Endothelial cell of umbilical vein (primary cell): ENCODE measurements at regions of chr18 and their contacts with region 1.

Region 1: DNA sequence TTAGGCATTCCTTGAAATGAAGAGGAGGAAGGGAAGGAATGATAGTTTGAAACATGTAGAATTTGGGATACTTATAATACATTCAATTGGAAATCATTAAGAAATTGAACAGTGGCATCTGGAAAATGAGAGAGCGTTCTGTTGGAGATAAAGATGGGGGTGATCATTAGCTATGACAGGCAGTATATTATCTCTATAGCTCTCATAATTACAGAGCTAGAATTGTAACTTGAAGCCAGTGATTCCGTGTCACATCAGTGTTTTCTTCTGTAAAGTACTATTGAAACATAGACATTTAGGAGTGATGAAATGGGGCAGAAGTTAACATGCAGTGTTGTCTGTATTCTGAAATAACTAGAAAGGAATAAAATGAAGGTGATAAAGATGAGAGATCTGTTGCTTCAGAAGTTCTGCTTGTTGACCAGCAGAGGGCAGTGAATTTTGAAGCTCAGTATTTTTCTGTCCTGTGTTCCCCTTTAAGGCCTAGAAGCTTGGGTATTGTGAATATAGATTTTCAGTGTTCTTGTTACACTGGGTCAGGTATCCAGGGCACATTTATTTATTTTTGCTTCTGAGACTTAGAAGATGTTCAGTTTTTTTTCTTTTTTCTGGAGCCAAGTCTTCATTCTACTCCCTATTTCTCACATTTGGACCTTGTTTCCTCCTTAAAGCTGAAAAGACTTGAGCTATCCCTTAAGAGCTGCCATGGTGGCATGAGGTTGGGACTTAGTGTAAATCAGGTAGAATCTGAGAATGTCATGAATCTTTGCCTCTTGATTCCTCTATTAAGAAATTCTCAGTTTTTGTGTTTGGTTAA is 157.4 kb downstream of the TAF4B start:
- DNase-seq: peak; percentile 52
- H3K4me3 ChIP-seq: no peak overlapping the region
- H3K27ac ChIP-seq: no peak overlapping the region
- H3K4me1 ChIP-seq: peaks cover 12% of the 10 kb centered on the region
- H3K27me3 ChIP-seq: no peaks in the 10 kb centered on the region
- CTCF ChIP-seq: peak; percentile 55 to 57
- POLR2A ChIP-seq: no peak

Region 2: DNA sequence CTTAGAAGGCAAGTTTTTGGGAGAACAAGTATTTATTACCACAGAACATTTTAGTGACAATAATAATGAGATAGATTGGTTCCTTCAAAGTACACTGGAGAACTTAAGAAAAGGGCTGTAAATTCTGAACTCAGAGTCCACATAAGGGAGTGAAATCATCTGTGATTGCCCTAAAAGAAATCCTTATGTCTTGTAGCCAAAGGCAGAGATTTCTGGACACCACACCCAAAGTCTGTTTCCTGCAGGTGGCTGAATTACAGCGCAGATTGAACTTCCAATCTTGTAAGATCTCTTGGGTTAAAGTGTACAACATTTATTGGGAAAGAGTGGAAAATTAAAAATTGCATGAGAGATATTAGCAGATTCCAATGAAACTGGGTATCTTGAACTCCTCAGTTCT is 13.6 kb before region 1 on chr18:
- CTCF ChIA-PET with region 1: interaction called, 49 read pairs
- POLR2A ChIA-PET with region 1: no interaction called
- dilution Hi-C with region 1: no loop called
- intact Hi-C with region 1: no loop called
- DNase-seq: no peak
- H3K4me3 ChIP-seq: no peak overlapping the region
- H3K27ac ChIP-seq: no peak overlapping the region
- H3K4me1 ChIP-seq: no peaks in the 10 kb centered on the region
- H3K27me3 ChIP-seq: no peaks in the 10 kb centered on the region
- CTCF ChIP-seq: no peak
- POLR2A ChIP-seq: no peak

Region 3: GRCh38 chr18:26458526-26459232 is 75.0 kb after region 1 on chr18:
- CTCF ChIA-PET with region 1: interaction called, 12 read pairs
- POLR2A ChIA-PET with region 1: no interaction called
- dilution Hi-C with region 1: no loop called
- intact Hi-C with region 1: no loop called
- DNase-seq: peak; percentile 18
- H3K4me3 ChIP-seq: no peak overlapping the region
- H3K27ac ChIP-seq: peak overlapping the region; percentile 27
- H3K4me1 ChIP-seq: peaks cover 30% of the 10 kb centered on the region
- H3K27me3 ChIP-seq: no peaks in the 10 kb centered on the region
- CTCF ChIP-seq: no peak
- POLR2A ChIP-seq: no peak

Region 4: GRCh38 chr18:26568926-26569665 is 185.4 kb after region 1 on chr18:
- CTCF ChIA-PET with region 1: interaction called, 10 read pairs
- POLR2A ChIA-PET with region 1: no interaction called
- dilution Hi-C with region 1: no loop called
- intact Hi-C with region 1: no loop called
- DNase-seq: no peak
- H3K4me3 ChIP-seq: no peak overlapping the region
- H3K27ac ChIP-seq: no peak overlapping the region
- H3K4me1 ChIP-seq: no peaks in the 10 kb centered on the region
- H3K27me3 ChIP-seq: peaks cover 6 to 14% of the 10 kb centered on the region in 2 experiments
- CTCF ChIP-seq: no peak
- POLR2A ChIP-seq: no peak

Region 5: DNA sequence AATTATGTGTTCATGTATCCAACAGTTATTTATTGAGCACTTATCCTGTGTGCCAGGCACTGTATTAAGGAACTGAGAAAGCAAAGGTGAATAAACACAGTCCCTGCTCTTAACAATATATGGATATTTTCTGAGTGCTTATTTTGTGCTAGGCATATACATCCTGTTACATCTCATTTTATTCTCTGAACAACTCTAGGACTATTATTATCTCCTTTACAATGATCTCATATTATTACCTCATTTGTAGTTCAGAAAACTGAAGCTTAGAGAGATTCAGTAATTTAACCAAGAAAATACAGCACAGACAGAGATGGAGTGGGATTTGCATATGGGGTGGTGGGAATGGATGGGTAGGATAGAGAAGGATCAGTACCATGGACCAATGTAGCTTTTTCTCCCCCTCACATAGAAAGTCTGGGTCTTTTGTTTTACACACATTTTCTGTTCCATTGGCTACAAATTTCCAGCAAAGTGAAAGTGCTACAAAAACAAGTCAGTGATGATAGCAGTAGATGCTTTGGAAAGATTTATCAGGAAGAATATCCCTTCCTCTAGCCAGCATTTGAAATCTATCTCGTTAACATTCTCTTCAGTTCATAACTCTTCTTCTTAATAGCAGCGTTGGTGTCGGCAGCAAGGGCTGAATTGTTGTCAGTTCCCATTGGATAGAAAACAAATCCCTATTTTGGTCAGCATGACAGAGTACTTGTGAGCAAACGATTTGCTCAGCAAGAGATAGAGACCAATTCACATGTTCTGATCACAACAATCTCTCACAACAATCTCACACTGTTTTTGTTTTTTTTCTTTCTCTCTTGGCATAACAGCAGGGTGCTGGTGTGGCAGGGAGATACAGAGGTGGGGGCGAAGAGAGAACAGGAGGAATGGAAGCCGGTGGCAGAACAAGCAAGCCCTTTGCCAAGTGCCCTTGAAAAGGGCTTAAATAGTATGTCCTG is 266.9 kb after region 1 on chr18:
- CTCF ChIA-PET with region 1: interaction called, 71 read pairs
- POLR2A ChIA-PET with region 1: no interaction called
- dilution Hi-C with region 1: no loop called
- intact Hi-C with region 1: loop called (anchors 1 kb)
- DNase-seq: no peak
- H3K4me3 ChIP-seq: no peak overlapping the region
- H3K27ac ChIP-seq: no peak overlapping the region
- H3K4me1 ChIP-seq: no peaks in the 10 kb centered on the region
- H3K27me3 ChIP-seq: peaks cover 40 to 51% of the 10 kb centered on the region in 2 experiments
- CTCF ChIP-seq: no peak
- POLR2A ChIP-seq: no peak